ENCODE measurements at regions of chr12 and their contacts with region 1.

Region 1: GRCh38 chr12:101859664-101860607 is 17.4 kb upstream of the DRAM1 start:
- DNase-seq: no peak
- H3K4me3 Mint-ChIP-seq: no peak overlapping the region
- H3K27ac Mint-ChIP-seq: peak overlapping the region; percentile 68
- H3K4me1 Mint-ChIP-seq: peaks cover 23% of the 10 kb centered on the region
- H3K27me3 Mint-ChIP-seq: no peaks in the 10 kb centered on the region

Region 2: GRCh38 chr12:101686176-101686575 is 173.8 kb before region 1 on chr12:
- intact Hi-C with region 1: no loop called
- DNase-seq: no peak
- H3K4me3 Mint-ChIP-seq: no peak overlapping the region
- H3K27ac Mint-ChIP-seq: no peak overlapping the region
- H3K4me1 Mint-ChIP-seq: no peaks in the 10 kb centered on the region
- H3K27me3 Mint-ChIP-seq: peaks cover 20% of the 10 kb centered on the region

Region 3: GRCh38 chr12:101792051-101792931 is 67.6 kb before region 1 on chr12:
- intact Hi-C with region 1: loop called (anchors 2 kb)
- DNase-seq: no peak
- H3K4me3 Mint-ChIP-seq: no peak overlapping the region
- H3K27ac Mint-ChIP-seq: peak overlapping the region; percentile 72
- H3K4me1 Mint-ChIP-seq: peaks cover 40% of the 10 kb centered on the region
- H3K27me3 Mint-ChIP-seq: no peaks in the 10 kb centered on the region